AG04449 (cell line): ENCODE measurements at regions of chr6 and their contacts with region 1.

Region 1: GRCh38 chr6:11575408-11576033 is 38.0 kb downstream of the TMEM170B start:
- DNase-seq: peak; percentile 41
- H3K4me3 ChIP-seq: no peak overlapping the region
- CTCF ChIP-seq: peak; percentile 90

Region 2: DNA sequence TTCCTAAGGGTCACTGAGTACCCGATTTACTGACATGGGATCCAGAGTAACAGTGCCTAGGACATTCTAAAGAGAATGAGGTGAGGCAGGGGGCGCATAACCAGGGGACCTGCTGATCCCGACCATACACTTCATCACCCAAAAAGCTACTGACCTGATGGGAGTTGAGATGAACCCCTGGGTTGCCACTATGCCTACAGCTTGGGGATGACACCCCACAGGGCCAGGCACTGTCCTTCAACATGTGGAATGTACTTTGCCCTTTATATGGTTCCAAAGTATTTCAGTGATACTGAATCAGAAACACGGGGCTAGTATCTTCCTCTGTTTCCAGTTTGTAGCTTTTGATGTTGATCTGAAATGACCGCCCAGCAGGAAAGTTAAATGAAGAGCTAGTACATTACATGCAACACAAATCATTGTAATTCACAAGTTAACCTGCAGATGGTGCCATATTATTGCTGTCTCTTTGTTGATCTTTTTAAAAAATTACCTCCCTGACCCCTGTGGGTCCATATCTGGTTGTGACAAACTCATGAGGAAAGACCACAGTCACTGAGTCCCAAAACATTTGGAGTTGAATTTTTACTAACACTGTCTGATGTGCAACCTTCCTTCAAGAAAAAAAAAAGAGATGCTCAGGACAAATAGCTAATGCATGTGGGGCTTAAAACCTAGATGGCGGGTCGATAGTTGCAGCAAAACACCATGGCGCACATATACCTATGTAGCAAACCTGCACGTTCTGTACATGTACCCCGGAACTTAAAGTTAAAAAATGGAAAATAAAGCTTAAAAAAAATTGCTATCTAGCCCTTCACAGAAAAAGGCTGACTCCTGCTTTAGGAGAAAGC is 1097.1 kb before region 1 on chr6:
- CTCF ChIA-PET with region 1: interaction called, 11 read pairs
- POLR2A ChIA-PET with region 1: no interaction called
- DNase-seq: no peak
- H3K4me3 ChIP-seq: no peak overlapping the region
- CTCF ChIP-seq: peak; percentile 28

Region 3: DNA sequence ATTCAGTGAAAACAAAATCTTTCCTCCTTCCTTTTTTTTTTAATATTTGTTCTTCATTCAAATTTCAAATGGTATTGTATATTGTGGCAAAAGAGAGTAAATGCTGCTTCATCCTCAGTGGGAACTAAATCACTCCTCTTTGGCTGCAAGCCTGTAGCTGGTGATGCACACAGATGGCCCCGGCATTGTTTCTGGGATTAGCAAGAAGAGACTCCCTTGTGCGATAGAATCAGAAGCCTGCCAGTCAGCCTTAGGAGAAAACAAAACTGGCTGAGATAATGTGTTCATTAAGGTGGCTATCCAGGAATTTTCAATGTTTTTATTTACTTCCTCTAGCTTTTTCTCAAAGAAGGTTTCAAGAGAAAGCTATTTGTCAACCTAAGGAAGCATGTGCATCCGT is 510.7 kb before region 1 on chr6:
- CTCF ChIA-PET with region 1: interaction called, 30 read pairs
- POLR2A ChIA-PET with region 1: no interaction called
- DNase-seq: no peak
- H3K4me3 ChIP-seq: no peak overlapping the region
- CTCF ChIP-seq: no peak

Region 4: DNA sequence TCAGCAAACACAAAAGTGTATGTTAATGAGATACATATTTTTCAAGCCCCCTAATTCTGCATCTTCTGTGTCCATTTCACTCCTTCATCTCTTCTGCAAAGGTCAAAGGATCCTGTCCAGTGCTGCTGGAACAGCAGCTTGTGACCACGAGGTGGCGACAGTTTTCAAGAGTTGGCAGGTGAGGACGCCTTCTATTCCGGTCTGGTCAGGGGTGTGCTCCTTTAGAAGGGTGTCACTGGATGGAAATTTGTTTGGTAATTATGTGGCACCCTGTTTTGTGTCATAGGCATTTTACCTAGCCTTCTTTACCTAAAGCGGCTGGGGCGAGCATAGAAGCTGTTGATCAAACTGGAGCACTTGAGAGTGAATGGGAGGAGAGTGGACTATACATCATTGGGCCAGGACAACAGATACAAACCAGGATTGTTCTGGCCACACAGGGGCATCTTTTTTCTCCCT is 431.1 kb before region 1 on chr6:
- CTCF ChIA-PET with region 1: interaction called, 14 read pairs
- POLR2A ChIA-PET with region 1: no interaction called
- DNase-seq: no peak
- H3K4me3 ChIP-seq: no peak overlapping the region
- CTCF ChIP-seq: peak; percentile 86

Region 5: GRCh38 chr6:11460001-11460668 is 115.4 kb before region 1 on chr6:
- CTCF ChIA-PET with region 1: no interaction called
- POLR2A ChIA-PET with region 1: no interaction called
- DNase-seq: no peak
- H3K4me3 ChIP-seq: no peak overlapping the region
- CTCF ChIP-seq: no peak

Region 6: DNA sequence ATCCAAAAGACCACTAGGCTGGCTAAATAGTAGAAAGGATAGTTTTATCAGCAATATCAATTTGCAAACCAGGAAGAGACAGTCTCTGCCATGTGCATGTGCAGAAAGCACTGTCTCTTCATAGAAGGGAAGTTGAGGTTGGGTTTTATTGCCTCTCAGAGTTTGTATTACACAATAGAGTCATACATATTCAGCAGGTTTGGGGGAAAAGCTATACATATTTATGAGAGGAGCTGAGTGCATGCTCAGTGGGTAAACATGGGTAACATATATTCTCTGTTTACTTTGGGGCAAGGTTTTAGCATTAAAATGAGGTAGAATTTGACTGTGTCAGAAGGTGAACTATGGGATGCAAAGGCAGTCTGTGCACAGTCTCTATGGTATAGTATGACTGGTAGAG is 23.1 kb before region 1 on chr6:
- CTCF ChIA-PET with region 1: interaction called, 22 read pairs
- POLR2A ChIA-PET with region 1: no interaction called
- DNase-seq: no peak
- H3K4me3 ChIP-seq: no peak overlapping the region
- CTCF ChIP-seq: no peak

Region 7: GRCh38 chr6:11563793-11564192 is 11.7 kb before region 1 on chr6:
- CTCF ChIA-PET with region 1: interaction called, 25 read pairs
- POLR2A ChIA-PET with region 1: interaction called, 3 read pairs
- DNase-seq: no peak
- H3K4me3 ChIP-seq: no peak overlapping the region
- CTCF ChIP-seq: no peak

Region 8: DNA sequence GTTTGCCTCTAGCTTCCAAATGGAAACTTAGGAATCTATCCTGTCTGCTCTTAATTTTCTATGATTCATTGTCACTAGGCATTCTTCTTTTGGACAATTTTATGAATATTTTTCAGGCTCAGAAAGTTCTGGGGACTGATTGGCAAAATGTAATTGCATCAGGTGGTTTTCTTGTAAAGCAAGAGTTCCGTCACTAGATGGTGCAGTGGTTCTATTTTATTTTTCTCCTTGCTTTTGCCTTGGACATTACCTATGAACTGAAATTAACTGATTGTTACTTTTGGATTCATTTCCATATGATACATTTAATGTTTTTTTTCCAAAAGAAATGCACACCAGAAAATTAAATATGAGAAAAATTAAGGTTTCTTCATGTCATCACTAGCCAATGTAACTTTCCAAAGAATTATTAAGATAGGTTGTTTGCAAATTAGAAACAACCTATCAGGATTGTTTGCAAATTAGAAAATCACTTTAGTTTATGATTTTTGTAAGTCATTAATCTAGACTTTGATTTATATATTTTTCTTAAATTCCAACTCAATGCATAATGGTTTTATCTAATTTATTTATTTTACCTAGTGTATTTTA is 10.0 kb after region 1 on chr6:
- CTCF ChIA-PET with region 1: interaction called, 16 read pairs
- POLR2A ChIA-PET with region 1: no interaction called
- DNase-seq: no peak
- H3K4me3 ChIP-seq: no peak overlapping the region
- CTCF ChIP-seq: peak; percentile 50